ENCODE measurements at regions of chr3 and their contacts with region 1.

Region 1: DNA sequence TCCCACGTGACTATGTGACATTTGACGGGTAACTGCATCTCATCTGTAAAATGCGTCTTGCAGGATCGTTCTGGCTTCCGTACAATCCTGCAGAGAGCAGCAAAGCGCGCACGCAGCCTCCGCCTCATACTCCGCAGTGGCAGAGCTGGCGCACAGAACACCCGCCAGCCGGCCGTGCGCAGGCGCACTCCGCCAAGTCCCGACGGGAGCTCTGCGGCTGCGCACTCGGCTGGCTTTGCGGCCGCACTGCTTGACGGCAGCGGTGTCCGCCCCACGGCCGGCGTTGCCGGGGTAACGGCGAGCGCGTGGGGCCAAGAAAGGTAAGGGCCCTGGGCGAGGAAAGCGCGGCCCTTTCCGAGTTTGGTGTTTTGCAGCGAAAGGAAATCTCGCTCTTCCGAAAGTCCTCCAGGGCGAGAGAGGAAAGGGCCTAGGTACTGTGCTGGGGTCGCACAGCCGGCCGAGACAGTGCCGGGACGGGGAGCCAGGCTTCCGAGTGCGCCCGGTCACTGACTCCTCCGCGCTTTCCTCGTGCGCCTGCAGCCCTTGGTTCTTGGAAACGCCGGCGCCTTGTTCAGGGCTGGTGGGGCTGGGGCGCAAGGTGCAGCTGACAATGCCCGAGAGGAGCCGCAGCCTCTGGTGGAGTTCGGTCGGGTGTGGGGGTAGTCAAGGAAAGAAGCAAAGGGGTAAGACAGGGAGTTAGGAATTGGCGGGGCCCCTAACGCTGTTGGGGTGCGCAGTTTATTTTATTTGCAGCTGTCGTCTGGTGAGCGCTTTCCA is at the start of gene TSEN2:
- DNase-seq: peak; percentile 92
- H3K4me3 Mint-ChIP-seq: peak within 1 kb of the TSS; percentile 92
- H3K27ac Mint-ChIP-seq: peak within 1 kb of the TSS; percentile 84
- H3K4me1 Mint-ChIP-seq: peaks cover 15% of the 10 kb centered on the region
- H3K27me3 Mint-ChIP-seq: no peaks in the 10 kb centered on the region
- CTCF ChIP-seq: peak; percentile 15
- total RNA-seq, gene TSEN2: 24.5 and 32.3 TPM in 2 replicates

Region 2: DNA sequence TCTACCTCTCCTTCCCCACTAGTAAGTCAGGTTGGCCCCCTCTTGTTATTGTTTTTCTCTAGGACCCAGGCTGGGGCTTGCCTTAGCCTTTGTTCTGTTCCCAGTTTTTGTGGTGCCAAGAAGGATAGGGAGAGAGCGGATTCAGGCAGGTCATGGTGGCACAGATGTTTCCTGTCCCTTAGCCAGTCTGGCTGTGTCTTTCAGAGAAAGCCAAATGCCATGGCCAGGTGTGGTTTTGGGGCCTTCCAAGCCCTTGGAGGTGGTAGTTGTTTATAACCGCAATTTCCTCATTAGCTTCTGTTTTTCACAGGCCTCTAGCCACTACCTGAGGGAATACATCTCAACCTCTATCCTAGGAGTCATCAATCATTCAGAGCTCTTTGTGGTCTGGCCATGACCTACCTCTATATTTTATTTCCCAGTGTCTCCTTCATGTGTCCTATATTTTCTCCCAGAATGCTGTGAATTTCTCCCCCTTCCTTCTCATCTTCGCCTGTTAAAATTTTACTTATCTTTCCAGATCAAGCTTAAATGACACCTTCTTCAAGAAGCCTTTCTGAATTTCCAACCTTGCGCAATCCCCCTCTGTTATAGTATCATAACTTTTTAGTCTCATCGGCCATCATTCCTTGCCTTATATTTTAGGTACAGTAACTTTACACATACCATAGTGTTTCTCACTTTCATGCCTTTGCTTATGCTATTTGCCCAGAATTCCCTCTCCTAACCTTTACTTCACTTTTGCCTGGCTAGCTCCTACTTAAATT is 363.8 kb before region 1 on chr3:
- CTCF ChIA-PET with region 1: interaction called, 13 read pairs
- POLR2A ChIA-PET with region 1: no interaction called
- intact Hi-C with region 1: no loop called
- DNase-seq: no peak
- H3K4me3 Mint-ChIP-seq: no peak overlapping the region
- H3K27ac Mint-ChIP-seq: no peak overlapping the region
- H3K4me1 Mint-ChIP-seq: peaks cover 12% of the 10 kb centered on the region
- H3K27me3 Mint-ChIP-seq: peaks cover 24% of the 10 kb centered on the region
- CTCF ChIP-seq: no peak

Region 3: DNA sequence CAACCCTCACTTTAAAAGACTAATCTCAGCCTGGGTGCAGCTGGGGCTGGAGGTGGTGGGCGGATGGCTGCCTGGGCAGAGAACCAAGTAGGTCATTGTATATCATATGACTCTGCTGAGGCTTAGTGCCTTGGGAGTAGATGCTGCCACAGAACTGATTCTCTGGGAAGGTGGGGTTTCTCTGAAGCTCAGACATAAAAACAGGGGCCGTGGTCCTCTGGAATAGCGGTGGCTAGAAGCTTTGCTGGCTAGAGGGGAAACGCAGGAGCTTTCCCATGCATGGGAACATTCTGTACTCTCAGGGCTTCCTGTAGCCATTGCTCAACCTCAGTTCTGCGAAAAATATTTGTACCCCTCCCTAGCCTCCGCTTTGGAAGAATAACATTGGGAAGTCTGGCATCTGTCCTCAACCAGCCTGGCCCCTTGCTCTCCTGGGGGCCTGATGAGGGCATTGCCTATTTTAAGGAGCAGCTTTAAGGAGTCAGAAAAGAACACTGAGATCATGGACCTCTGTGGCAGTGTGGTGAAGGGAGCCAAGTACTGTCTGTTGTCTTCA is 340.4 kb before region 1 on chr3:
- CTCF ChIA-PET with region 1: interaction called, 58 read pairs
- POLR2A ChIA-PET with region 1: no interaction called
- intact Hi-C with region 1: no loop called
- DNase-seq: peak; percentile 90
- H3K4me3 Mint-ChIP-seq: peak overlapping the region; percentile 38
- H3K27ac Mint-ChIP-seq: peak overlapping the region; percentile 94
- H3K4me1 Mint-ChIP-seq: peaks cover 28% of the 10 kb centered on the region
- H3K27me3 Mint-ChIP-seq: no peaks in the 10 kb centered on the region
- CTCF ChIP-seq: no peak

Region 4: GRCh38 chr3:12193485-12194165 is 290.8 kb before region 1 on chr3:
- CTCF ChIA-PET with region 1: interaction called, 13 read pairs
- POLR2A ChIA-PET with region 1: interaction called, 6 read pairs
- intact Hi-C with region 1: loop called (anchors 2 kb)
- DNase-seq: peak; percentile 97
- H3K4me3 Mint-ChIP-seq: peak overlapping the region; percentile 24
- H3K27ac Mint-ChIP-seq: peak overlapping the region; percentile 89
- H3K4me1 Mint-ChIP-seq: peaks cover 42% of the 10 kb centered on the region
- H3K27me3 Mint-ChIP-seq: no peaks in the 10 kb centered on the region
- CTCF ChIP-seq: no peak

Region 5: DNA sequence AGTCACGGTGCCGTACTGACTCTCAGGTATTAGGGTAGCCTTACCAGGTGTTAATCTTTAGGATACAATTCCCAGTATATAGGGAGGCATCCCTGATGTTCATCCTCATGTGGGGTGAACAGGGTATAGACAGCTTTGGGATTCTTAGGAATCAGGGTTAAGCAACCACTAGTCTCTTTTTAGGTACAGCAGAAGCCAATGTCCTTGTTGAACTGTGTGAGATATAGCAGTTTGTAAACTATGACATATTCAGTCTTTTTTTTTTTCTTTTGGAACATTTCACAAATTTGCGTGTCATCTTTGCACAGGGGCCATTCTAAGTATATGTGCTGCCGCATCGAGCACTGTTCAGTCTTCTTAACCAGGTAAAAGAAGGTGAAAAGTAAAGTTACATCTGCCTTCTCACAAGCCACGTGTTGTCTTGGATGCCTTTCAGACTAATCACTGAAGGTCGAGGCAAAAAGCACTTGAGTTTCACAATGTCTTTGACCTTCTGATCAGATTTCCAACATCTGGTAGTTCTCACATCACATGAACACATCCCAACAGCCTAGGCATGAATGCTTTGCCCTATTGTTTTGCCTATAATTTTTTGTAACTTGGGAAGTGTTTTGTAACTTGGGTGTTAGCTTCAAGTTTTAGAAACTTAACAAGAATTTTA is 17.1 kb after region 1 on chr3:
- CTCF ChIA-PET with region 1: interaction called, 4 read pairs
- POLR2A ChIA-PET with region 1: interaction called, 71 read pairs
- intact Hi-C with region 1: no loop called
- DNase-seq: peak; percentile 60
- H3K4me3 Mint-ChIP-seq: no peak overlapping the region
- H3K27ac Mint-ChIP-seq: peak overlapping the region; percentile 75
- H3K4me1 Mint-ChIP-seq: peaks cover 16% of the 10 kb centered on the region
- H3K27me3 Mint-ChIP-seq: no peaks in the 10 kb centered on the region
- CTCF ChIP-seq: no peak

Region 6: DNA sequence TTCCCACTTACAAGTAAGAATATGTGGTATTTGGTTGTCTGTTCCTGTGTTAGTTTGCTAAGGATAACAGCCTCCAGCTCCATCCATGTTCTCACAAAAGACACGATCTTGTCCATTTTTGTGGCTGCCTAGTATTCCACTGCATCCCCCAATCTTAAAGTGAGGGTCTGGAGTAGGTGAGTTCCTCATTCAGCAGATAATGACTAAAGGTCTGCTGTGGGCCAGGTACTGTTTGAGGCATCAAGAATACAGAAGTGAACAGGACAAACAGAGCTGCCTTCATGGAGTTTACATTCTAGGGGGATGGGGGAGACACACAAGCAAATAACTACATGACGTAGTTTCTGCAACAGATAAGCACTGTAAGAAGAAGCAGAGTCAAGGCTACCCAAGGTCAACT is 36.6 kb after region 1 on chr3:
- CTCF ChIA-PET with region 1: no interaction called
- POLR2A ChIA-PET with region 1: no interaction called
- intact Hi-C with region 1: no loop called
- DNase-seq: no peak
- H3K4me3 Mint-ChIP-seq: no peak overlapping the region
- H3K27ac Mint-ChIP-seq: no peak overlapping the region
- H3K4me1 Mint-ChIP-seq: no peaks in the 10 kb centered on the region
- H3K27me3 Mint-ChIP-seq: no peaks in the 10 kb centered on the region
- CTCF ChIP-seq: no peak

Region 7: DNA sequence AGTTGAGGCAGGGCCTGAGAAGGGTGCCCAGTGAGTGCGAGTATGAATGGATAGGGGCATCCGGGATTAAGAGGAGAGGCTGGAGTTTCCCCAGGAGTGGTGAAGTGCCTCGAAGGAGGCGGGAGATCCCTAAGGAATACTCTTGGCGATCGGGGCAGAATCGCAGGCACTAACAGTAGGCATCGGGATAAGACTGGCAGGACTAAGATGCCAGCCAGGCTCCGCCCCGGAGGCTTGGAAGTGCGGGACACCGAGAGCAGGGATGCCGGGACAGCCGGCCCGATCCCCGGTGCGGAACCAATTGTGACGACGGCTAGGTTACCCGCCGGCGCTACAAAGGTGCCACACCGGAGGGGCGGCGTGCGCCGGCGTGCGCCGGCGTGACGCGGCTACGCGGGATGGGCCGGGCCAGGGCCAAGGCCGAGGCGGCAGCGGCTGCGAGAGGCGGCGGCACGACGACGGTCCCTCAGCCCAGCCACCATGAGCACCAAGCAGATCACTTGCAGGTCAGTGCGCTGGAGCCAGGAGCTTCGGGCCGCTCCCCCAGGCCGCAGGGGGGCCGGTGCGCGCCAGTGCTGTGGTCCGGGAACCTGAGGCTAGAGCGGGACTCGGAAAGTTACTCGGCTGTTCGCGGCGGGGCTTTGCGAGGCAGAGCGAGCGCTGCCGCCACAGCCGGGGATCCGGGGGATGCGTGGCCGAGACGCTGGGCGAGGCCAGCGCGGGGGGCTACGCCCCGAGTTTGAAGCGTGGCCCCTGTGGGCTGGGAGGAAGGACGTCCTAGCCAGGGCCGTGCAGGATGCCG is 72.5 kb after region 1 on chr3 and contains the start of gene MKRN2:
- CTCF ChIA-PET with region 1: interaction called, 5 read pairs
- POLR2A ChIA-PET with region 1: interaction called, 51 read pairs
- intact Hi-C with region 1: loop called (anchors 2 kb)
- DNase-seq: peak; percentile 89
- H3K4me3 Mint-ChIP-seq: peak within 1 kb of the TSS; percentile 73
- H3K27ac Mint-ChIP-seq: peak within 1 kb of the TSS; percentile 65
- H3K4me1 Mint-ChIP-seq: peaks cover 35% of the 10 kb centered on the region
- H3K27me3 Mint-ChIP-seq: no peaks in the 10 kb centered on the region
- CTCF ChIP-seq: no peak
- total RNA-seq, gene MKRN2: 22.0 and 25.6 TPM in 2 replicates

Region 8: GRCh38 chr3:12681943-12682390 is 197.6 kb after region 1 on chr3:
- CTCF ChIA-PET with region 1: no interaction called
- POLR2A ChIA-PET with region 1: no interaction called
- intact Hi-C with region 1: no loop called
- DNase-seq: peak; percentile 76
- H3K4me3 Mint-ChIP-seq: no peak overlapping the region
- H3K27ac Mint-ChIP-seq: peak overlapping the region; percentile 8
- H3K4me1 Mint-ChIP-seq: peaks cover 11% of the 10 kb centered on the region
- H3K27me3 Mint-ChIP-seq: no peaks in the 10 kb centered on the region
- CTCF ChIP-seq: no peak

Measured in MCF 10A (cell line).